ENCODE measurements at regions of chr2 and their contacts with region 1.

Region 1: GRCh38 chr2:230956827-230957755 is 32.0 kb upstream of the GPR55 start:
- DNase-seq: peak; percentile 68
- CTCF ChIP-seq: no peak

Region 2: GRCh38 chr2:230942920-230943896 is 13.9 kb before region 1 on chr2:
- CTCF ChIA-PET with region 1: interaction called, 10 read pairs
- POLR2A ChIA-PET with region 1: interaction called, 7 read pairs
- DNase-seq: peak; percentile 83
- CTCF ChIP-seq: no peak

Region 3: GRCh38 chr2:230968921-230969658 is 12.0 kb after region 1 on chr2:
- CTCF ChIA-PET with region 1: interaction called, 16 read pairs
- POLR2A ChIA-PET with region 1: interaction called, 5 read pairs
- DNase-seq: no peak
- CTCF ChIP-seq: no peak

Measured in GM10248 (cell line).